ENCODE measurements at regions of chr11 and their contacts with region 1.

Region 1: GRCh38 chr11:31958076-31958735 is 132.7 kb upstream of the RCN1 start:
- DNase-seq: peak; percentile 92
- H3K4me3 Mint-ChIP-seq: no peak overlapping the region
- H3K27ac Mint-ChIP-seq: no peak overlapping the region
- H3K4me1 Mint-ChIP-seq: peaks cover 5% of the 10 kb centered on the region
- H3K27me3 Mint-ChIP-seq: peaks cover 13% of the 10 kb centered on the region

Region 2: DNA sequence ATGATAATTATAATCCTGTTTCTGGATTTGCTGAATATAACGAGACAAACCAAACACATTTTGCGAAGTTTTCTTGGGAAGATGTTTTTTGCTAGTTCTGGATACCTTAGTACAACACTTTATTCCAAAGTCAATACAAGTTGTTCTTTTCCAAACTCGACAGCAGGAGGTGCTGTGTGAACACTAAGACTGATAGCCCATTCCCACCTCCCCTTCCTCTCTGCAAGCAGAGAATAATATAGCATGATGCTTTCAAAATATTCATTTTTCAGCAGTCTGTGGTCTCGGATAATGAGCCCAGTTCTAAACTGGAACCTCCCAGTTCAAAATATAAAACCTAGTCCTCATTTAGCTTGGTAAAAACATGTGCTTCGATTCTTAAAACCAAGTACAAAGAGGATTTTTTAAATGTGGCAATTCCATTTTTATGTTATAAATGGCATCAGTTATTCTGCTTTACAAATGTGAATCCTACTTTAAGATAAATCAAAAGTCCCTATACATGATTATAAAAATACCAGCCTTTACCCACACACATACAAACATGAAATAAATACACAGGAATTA is 717.8 kb before region 1 on chr11:
- intact Hi-C with region 1: loop called (anchors 5 kb)
- DNase-seq: peak; percentile 63
- H3K4me3 Mint-ChIP-seq: no peak overlapping the region
- H3K27ac Mint-ChIP-seq: no peak overlapping the region
- H3K4me1 Mint-ChIP-seq: no peaks in the 10 kb centered on the region
- H3K27me3 Mint-ChIP-seq: peaks cover 10% of the 10 kb centered on the region

Region 3: DNA sequence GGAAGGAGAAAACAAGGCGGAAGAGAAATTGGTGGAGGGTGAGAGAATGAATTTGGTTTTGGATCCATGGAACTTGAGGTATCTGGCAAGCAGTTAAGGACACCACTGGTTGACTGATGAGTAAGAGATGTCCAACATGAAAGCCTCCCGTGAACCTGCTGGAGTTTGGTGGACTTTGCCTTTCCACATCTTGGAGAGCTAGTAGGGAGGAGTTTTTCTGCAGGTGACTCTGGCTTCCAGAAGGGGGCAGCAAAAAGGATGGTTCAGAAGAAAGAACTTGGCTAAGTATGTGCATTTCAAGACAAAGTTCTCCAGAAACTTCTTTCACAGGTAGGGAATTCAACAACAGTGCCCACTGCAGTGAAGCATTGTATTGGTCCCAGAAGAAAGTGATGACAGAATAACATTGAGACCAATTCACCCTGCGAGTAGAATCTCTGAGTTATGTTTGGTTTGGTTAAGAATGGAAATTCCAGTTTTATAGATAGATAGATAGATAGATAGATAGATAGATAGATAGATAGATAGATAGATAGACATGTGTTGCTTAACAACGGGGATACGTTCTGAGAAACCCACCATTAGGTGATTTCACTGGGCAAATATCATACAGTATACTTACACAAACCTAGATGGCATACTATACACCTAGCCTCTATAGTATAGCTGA is 617.2 kb before region 1 on chr11:
- intact Hi-C with region 1: loop called (anchors 5 kb)
- DNase-seq: peak; percentile 69
- H3K4me3 Mint-ChIP-seq: no peak overlapping the region
- H3K27ac Mint-ChIP-seq: no peak overlapping the region
- H3K4me1 Mint-ChIP-seq: no peaks in the 10 kb centered on the region
- H3K27me3 Mint-ChIP-seq: peaks cover 6% of the 10 kb centered on the region

Region 4: GRCh38 chr11:32090545-32091373 is 132.6 kb after region 1 on chr11 and contains the start of gene RCN1:
- intact Hi-C with region 1: no loop called
- DNase-seq: peak; percentile 84
- H3K4me3 Mint-ChIP-seq: peak within 1 kb of the TSS; percentile 85
- H3K27ac Mint-ChIP-seq: peak within 1 kb of the TSS; percentile 92
- H3K4me1 Mint-ChIP-seq: peaks cover 35% of the 10 kb centered on the region
- H3K27me3 Mint-ChIP-seq: peaks cover 13% of the 10 kb centered on the region
- total RNA-seq, gene RCN1: 30.5 and 30.6 TPM in 2 replicates